ENCODE measurements at regions of chr5 and their contacts with region 1.

Region 1: GRCh38 chr5:174020397-174021296 is 24.9 kb upstream of the NSG2 start:
- DNase-seq: peak; percentile 64 to 66
- H3K4me3 ChIP-seq: peak overlapping the region; percentile 40
- H3K4me3 Mint-ChIP-seq: peak overlapping the region; percentile 88
- H3K27ac Mint-ChIP-seq: peak overlapping the region; percentile 63
- H3K4me1 ChIP-seq: 0 out of 2 replicates have a peak, but pooled peaks cover 4% of the 10 kb centered on the region
- H3K4me1 Mint-ChIP-seq: peaks cover 7% of the 10 kb centered on the region
- H3K27me3 ChIP-seq: peaks cover 1% of the 10 kb centered on the region; the same call in 1 of the 2 replicates
- H3K27me3 Mint-ChIP-seq: peaks cover 19% of the 10 kb centered on the region
- CTCF ChIP-seq: peak; percentile 53 to 88

Region 2: DNA sequence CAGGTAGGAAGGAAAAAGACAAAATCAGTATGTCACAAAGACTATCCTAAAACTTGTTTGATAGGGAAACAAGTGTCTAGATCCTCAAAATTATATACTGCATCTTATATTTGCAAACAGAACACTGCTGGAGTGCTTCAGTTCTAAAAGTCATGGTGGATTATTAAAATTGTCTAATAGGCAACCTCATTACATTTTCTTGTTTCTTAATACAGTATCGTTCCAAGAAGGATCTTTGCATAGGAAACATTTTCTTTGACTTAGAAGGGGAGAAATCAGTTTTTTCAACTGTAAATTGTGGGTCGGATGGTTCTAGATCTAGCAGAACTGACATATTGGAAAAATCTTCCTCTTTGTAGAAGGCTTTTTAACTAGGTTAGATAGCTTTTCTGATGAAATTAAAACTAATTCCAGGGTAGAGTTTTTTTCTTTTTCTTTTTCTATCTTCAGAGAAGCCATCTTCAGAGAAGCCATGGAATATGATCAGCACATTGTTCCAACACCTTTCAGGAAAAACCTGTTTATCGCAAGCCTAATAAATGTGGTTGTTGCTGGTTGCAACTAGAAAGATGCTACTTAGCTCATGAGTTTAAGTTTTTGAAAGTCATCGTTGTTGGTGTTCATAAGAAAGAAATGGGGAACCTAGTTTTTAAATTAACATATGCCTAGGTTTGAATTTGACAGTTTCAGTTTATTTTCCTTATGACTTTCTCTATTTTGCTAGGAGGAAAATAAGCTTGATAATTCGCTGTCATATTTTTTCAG is 125.1 kb before region 1 on chr5:
- CTCF ChIA-PET with region 1: no interaction called
- POLR2A ChIA-PET with region 1: no interaction called
- intact Hi-C with region 1: no loop called
- DNase-seq: no peak
- H3K4me3 ChIP-seq: no peak overlapping the region
- H3K4me3 Mint-ChIP-seq: no peak overlapping the region
- H3K27ac Mint-ChIP-seq: no peak overlapping the region
- H3K4me1 ChIP-seq: peaks cover 9% of the 10 kb centered on the region
- H3K4me1 Mint-ChIP-seq: peaks cover 7% of the 10 kb centered on the region
- H3K27me3 ChIP-seq: no peaks in the 10 kb centered on the region
- H3K27me3 Mint-ChIP-seq: no peaks in the 10 kb centered on the region
- CTCF ChIP-seq: no peak

Region 3: DNA sequence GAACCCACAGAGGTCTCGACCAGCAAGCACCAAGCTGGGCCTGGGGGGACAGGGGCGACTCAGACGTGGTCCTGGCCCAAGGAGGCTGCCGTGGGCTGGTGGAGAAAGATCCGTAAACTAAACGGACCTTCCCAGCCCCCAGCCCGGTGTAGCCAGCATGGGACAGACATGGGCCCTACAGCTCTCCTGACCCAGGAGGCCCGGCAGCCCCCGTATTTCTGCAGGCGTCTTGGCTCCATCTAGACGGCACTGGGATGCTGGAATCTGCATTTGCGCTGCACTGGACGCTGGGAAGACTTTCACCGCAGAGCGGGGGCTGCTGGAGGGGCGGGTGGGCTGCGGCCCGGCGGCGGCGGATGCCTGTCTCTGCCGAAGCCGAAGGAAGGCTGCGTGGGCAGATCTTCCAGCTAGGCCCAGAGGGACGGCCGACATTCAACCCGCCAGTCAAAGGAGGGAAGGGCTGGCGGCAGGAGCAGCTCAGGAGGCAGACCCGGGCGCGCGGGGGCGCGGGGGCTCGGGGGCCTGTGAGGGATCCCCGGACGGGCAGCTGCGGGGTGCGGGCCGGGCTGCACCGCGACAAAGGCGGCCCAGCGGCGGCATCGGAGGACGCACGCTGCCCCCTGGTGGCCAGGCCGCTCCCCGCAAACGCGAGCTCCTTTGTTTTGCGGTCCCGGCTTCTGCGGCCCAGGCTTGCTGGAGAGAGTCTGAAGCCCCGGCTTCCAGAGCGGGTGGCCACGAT is 291.1 kb after region 1 on chr5:
- CTCF ChIA-PET with region 1: interaction called, 14 read pairs
- POLR2A ChIA-PET with region 1: no interaction called
- intact Hi-C with region 1: loop called (anchors 1 kb)
- DNase-seq: peak; percentile 64 to 85
- H3K4me3 ChIP-seq: peak overlapping the region; percentile 32
- H3K4me3 Mint-ChIP-seq: peak overlapping the region; percentile 27
- H3K27ac Mint-ChIP-seq: no peak overlapping the region
- H3K4me1 ChIP-seq: peaks cover 4% of the 10 kb centered on the region; the same call in 1 of the 2 replicates
- H3K4me1 Mint-ChIP-seq: no peaks in the 10 kb centered on the region
- H3K27me3 ChIP-seq: peaks cover 2% of the 10 kb centered on the region
- H3K27me3 Mint-ChIP-seq: peaks cover 25% of the 10 kb centered on the region
- CTCF ChIP-seq: peak; percentile 82 to 84